ENCODE measurements at regions of chr20 and their contacts with region 1.

Region 1: DNA sequence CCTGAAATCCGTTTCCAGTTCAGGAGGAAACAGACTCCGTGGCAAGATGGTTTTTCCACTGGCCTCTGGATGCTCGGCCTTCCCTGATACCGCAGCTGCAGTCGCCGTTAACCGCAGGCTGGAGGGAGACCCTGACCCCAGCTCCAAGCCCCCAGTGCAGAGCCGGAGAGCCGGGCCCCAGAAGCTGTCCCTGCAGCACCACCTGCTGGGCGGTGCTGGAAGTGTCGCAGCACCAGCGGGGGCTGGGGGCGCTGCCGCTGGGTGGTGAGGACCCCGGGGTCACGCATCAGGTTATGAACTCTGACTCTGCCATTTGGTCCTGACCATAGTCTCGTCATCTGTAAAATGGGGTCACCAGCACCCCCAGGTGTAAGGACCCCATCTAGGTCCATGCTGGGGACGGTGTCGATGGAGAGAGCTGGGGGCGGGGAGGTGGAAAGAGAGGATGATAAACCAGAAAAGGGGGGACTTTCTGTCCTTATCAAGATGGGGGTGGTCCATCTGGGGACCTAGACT is 20.7 kb upstream of the CHRNA4 start:
- DNase-seq: no peak
- H3K4me3 ChIP-seq: no peak overlapping the region
- CTCF ChIP-seq: peak; percentile 94

Region 2: DNA sequence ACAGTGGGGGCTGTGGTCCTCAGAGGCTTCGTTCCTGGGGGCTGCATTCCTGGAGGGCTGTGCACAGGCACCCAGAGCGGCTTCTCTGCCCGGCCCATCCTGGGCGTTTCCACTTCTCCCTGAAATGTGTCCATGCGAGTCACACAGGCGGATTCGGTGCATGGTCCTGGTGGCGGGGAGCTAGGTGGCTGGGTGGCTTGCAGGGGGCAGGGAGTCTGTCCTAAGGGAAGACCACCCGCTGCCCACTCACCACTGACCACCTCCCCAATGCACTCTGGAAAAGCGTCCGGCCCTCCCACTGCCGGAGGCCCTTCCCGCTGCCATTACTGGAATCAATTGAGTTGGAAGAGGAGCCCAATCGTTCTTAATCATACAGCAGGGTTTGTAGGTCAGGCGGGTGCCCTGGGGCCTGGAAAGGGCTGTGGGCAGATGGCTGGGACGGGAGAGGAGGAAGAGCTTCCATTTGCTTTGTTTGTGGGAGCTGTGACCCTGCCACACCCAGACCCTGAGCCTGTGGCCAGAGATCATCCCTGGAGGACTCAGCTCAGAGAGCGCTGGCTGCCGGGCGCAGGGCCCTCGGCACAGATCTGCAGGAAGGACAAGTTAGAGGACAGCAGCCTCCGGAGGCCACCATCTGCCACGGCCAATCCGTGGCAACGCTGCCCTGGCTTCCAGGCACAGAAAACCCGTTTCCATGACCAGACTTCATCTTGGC is 27.1 kb before region 1 on chr20:
- CTCF ChIA-PET with region 1: no interaction called
- POLR2A ChIA-PET with region 1: no interaction called
- DNase-seq: no peak
- H3K4me3 ChIP-seq: no peak overlapping the region
- CTCF ChIP-seq: no peak

Region 3: GRCh38 chr20:63370618-63371187 is 11.2 kb before region 1 on chr20:
- CTCF ChIA-PET with region 1: interaction called, 16 read pairs
- POLR2A ChIA-PET with region 1: no interaction called
- DNase-seq: no peak
- H3K4me3 ChIP-seq: no peak overlapping the region
- CTCF ChIP-seq: no peak

Region 4: DNA sequence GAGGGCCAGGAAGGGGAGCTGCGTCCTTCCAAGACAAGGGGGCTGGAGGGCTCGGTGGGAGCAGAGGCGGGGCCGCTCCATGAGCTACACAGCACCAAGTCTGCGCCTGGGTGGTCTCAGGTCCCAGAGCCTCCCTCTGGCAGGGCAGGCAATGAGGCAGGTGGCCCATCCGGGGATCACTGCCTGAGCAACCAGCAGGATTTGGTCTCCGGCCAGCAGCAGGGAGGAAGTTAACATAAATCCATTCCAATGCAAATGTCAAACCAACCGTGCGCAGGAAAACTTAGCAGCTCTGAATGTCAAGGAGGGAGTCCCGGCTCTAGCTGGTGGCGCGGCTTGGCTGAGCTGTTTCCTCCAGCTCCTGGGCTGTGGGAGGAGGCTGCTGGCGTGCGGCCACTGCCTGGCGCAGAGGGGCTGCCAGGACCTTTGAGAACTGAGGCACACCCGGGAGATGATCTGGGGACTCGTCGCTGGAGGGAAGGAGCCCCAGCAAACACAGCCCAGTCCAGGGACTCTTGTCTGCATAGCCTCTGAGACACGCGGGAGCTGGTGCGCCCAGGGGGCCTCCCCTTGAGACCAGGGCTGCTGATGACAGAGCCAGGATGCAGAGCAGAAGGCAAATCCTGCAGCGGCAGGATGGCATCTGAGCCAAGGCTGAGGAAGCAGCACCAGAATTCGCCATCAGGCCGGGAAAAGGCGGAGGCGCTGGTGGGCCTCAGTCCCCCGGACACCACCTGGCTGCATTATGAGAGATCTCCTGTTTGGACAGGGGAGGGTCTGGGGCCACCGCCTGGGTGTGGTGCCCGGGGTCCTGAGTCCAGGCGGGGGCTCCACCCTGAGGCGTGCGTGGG is 12.4 kb after region 1 on chr20:
- CTCF ChIA-PET with region 1: interaction called, 10 read pairs
- POLR2A ChIA-PET with region 1: no interaction called
- DNase-seq: no peak
- H3K4me3 ChIP-seq: no peak overlapping the region
- CTCF ChIP-seq: no peak

Measured in AG04449 (cell line).